Endothelial cell of umbilical vein (primary cell): ENCODE measurements at regions of chr1 and their contacts with region 1.

Region 1: DNA sequence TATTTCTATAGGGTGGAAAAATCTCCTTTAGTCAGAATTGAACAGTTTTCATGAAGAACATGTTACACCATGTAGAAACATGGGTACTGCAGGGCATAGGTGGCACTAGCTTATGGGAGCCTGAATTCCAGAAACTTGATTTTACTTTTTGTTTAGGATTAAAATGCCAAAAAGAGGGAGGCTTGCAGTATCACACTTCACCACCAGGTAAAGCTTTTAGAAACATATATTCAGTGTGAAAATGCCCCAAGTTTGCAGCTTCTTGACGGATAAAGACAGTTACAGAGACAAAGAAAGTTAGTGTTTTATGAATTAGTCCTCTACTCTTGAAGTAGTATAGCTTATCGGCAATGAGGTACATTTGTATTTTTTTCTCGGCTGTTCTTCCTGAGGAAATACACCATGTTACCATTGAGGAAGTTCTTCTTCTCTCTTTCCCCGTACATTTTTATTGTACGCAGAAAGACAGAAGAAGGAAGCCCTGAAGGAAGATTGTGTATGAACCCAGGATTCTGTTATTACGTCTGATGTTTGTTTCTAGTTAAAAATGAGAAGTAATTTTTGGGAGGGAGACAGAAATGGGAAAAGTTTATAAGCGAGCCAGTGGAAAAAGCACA is 66.1 kb downstream of the PBX1 start:
- DNase-seq: peak; percentile 43
- H3K4me3 ChIP-seq: no peak overlapping the region
- H3K27ac ChIP-seq: no peak overlapping the region
- H3K4me1 ChIP-seq: no peaks in the 10 kb centered on the region
- H3K27me3 ChIP-seq: no peaks in the 10 kb centered on the region
- CTCF ChIP-seq: peak; percentile 23 to 42
- POLR2A ChIP-seq: no peak

Region 2: DNA sequence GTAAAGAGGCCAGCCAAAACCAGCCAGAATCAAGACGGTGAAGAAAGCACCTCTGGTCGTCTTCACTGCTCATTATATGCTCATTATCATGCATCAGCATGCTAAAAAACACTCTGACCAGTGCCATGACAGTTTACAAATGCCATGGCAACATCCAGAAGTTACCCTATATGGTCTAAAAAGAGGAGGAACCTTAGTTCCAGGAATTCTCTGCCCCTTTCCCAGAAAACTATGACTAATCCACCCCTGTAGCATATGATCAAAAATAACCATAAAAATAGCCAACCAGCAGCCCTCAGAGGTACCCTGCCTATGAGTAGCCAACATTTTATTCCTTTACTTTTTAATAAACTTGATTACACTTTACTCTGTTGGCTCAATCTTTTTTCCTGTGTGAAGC is 100.3 kb before region 1 on chr1:
- CTCF ChIA-PET with region 1: no interaction called
- POLR2A ChIA-PET with region 1: no interaction called
- dilution Hi-C with region 1: no loop called
- intact Hi-C with region 1: no loop called
- DNase-seq: no peak
- H3K4me3 ChIP-seq: no peak overlapping the region
- H3K27ac ChIP-seq: no peak overlapping the region
- H3K4me1 ChIP-seq: no peaks in the 10 kb centered on the region
- H3K27me3 ChIP-seq: no peaks in the 10 kb centered on the region
- CTCF ChIP-seq: no peak
- POLR2A ChIP-seq: no peak

Region 3: GRCh38 chr1:164611754-164612642 is 13.1 kb before region 1 on chr1:
- CTCF ChIA-PET with region 1: interaction called, 15 read pairs
- POLR2A ChIA-PET with region 1: no interaction called
- dilution Hi-C with region 1: no loop called
- intact Hi-C with region 1: no loop called
- DNase-seq: peak; percentile 89
- H3K4me3 ChIP-seq: no peak overlapping the region
- H3K27ac ChIP-seq: no peak overlapping the region
- H3K4me1 ChIP-seq: peaks cover 7% of the 10 kb centered on the region
- H3K27me3 ChIP-seq: no peaks in the 10 kb centered on the region
- CTCF ChIP-seq: no peak
- POLR2A ChIP-seq: no peak

Region 4: DNA sequence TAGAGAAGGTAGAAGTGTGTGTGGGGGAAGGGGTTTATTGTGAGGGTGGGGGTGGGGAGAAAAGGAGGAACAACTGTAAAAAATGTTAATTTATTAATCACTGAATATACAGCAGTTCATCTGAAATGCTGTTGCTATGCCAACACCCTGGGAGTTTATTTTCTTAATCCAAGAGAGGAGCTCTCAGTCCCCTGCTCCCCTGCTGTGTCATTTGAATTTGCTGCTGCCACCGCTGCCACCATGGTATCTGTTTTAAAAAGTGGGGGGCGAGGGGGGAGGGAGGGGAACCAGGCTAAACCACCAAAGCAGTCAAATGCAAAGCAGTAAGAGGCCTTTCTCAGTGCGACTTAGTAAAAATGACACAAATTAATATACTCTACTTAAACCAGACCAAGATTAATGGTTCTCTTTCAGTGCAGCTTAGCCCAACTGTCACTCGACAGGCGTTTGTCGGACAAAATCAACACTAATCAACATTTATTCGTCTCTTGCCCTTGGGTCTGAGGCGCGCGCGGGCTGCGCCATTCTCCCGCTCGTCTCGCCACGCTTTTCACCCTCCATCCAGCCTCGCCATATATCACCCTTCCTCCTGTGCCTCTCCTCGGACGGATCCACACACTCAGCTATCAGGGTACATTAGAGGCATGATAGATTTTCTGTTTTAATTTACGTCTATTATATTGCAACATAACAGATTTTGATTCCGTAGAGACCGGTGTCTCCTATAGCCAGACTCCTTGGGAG is 10.1 kb after region 1 on chr1:
- CTCF ChIA-PET with region 1: interaction called, 14 read pairs
- POLR2A ChIA-PET with region 1: no interaction called
- dilution Hi-C with region 1: no loop called
- intact Hi-C with region 1: no loop called
- DNase-seq: no peak
- H3K4me3 ChIP-seq: no peak overlapping the region
- H3K27ac ChIP-seq: no peak overlapping the region
- H3K4me1 ChIP-seq: no peaks in the 10 kb centered on the region
- H3K27me3 ChIP-seq: no peaks in the 10 kb centered on the region
- CTCF ChIP-seq: no peak
- POLR2A ChIP-seq: no peak

Region 5: GRCh38 chr1:165152727-165153126 is 527.6 kb after region 1 on chr1:
- CTCF ChIA-PET with region 1: no interaction called
- POLR2A ChIA-PET with region 1: no interaction called
- dilution Hi-C with region 1: no loop called
- intact Hi-C with region 1: no loop called
- DNase-seq: no peak
- H3K4me3 ChIP-seq: no peak overlapping the region
- H3K27ac ChIP-seq: no peak overlapping the region
- H3K4me1 ChIP-seq: no peaks in the 10 kb centered on the region
- H3K27me3 ChIP-seq: no peaks in the 10 kb centered on the region
- CTCF ChIP-seq: no peak
- POLR2A ChIP-seq: no peak